Right cardiac atrium (tissue), 5 donors: ENCODE measurements at regions of chr7 and their contacts with region 1.

Region 1: GRCh38 chr7:123871998-123872867 is 27.3 kb downstream of the HYAL4 start:
- DNase-seq: peak; percentile 35 to 58 (median 44)
- ATAC-seq: peak; percentile 86 to 87
- H3K4me3 ChIP-seq: no peak overlapping the region
- H3K27ac ChIP-seq: no peak overlapping the region
- H3K4me1 ChIP-seq: no peaks in the 10 kb centered on the region
- H3K27me3 ChIP-seq: no peaks in the 10 kb centered on the region

Region 2: GRCh38 chr7:123494193-123494796 is 377.9 kb before region 1 on chr7:
- intact Hi-C with region 1: loop called in 1 of 4 experiments (anchors 10 kb)
- DNase-seq: no peak
- ATAC-seq: no peak
- H3K4me3 ChIP-seq: no peak overlapping the region
- H3K27ac ChIP-seq: no peak overlapping the region
- H3K4me1 ChIP-seq: no peaks in the 10 kb centered on the region
- H3K27me3 ChIP-seq: no peaks in the 10 kb centered on the region

Region 3: GRCh38 chr7:123819001-123819400 is 53.2 kb before region 1 on chr7:
- intact Hi-C with region 1: no loop called
- DNase-seq: no peak
- ATAC-seq: no peak
- H3K4me3 ChIP-seq: no peak overlapping the region
- H3K27ac ChIP-seq: no peak overlapping the region
- H3K4me1 ChIP-seq: no peaks in the 10 kb centered on the region
- H3K27me3 ChIP-seq: no peaks in the 10 kb centered on the region

Region 4: DNA sequence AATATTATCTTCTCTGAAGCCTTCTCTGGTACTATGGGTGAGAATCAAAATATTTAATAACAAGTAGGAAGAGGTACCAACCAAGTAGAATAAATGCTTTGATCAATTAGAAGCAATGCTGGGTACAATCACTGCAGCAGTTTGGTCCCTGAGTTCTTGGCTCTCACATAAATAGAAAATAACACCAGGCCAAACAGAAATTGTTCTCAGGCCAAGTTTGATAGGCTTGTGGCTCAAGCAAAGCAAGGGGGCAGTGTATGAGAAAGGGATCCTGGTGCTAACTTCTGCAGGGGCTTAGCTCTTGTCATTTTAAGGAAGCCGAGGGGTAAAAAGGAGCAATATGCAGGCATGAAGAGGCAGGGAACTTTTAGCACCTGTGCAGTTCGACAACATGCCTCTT is 307.4 kb after region 1 on chr7:
- intact Hi-C with region 1: no loop called
- DNase-seq: no peak
- ATAC-seq: no peak
- H3K4me3 ChIP-seq: no peak overlapping the region
- H3K27ac ChIP-seq: no peak overlapping the region
- H3K4me1 ChIP-seq: no peaks in the 10 kb centered on the region
- H3K27me3 ChIP-seq: no peaks in the 10 kb centered on the region